Caco-2 (cell line): ENCODE measurements at regions of chr22 and their contacts with region 1.

Region 1: GRCh38 chr22:30326706-30327362 is at the start of gene TBC1D10A:
- DNase-seq: peak; percentile 96
- H3K4me3 ChIP-seq: peak within 1 kb of the TSS; percentile 87
- H3K4me3 Mint-ChIP-seq: peak within 1 kb of the TSS; percentile 79
- H3K27ac Mint-ChIP-seq: peak within 1 kb of the TSS; percentile 90
- H3K4me1 ChIP-seq: peaks cover 27% of the 10 kb centered on the region
- H3K4me1 Mint-ChIP-seq: peaks cover 30% of the 10 kb centered on the region
- H3K27me3 ChIP-seq: no peaks in the 10 kb centered on the region
- H3K27me3 Mint-ChIP-seq: no peaks in the 10 kb centered on the region
- CTCF ChIP-seq: no peak
- total RNA-seq, gene TBC1D10A: 11.1 and 12.2 TPM in 2 replicates

Region 2: DNA sequence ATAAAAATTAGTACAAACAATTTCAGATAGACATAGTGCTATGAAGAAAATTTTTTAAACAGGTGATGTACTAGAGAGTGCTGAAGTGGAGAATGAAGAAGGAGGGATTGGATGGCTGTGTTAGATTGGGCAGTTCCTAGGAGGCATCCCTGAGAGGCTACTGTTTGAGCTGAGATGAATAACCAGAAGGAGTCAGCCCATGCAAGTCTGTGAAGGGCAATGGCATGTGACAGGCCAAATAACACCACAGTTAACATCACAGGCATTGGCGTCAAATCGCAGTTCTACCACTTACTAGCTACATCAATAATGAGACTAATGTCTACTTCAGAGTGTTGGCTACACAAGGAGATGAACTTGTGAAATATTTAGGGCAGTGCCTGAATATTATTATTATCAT is 211.1 kb before region 1 on chr22:
- CTCF ChIA-PET with region 1: interaction called, 12 read pairs
- POLR2A ChIA-PET with region 1: interaction called, 3 read pairs
- intact Hi-C with region 1: no loop called
- DNase-seq: no peak
- H3K4me3 ChIP-seq: no peak overlapping the region
- H3K4me3 Mint-ChIP-seq: no peak overlapping the region
- H3K27ac Mint-ChIP-seq: no peak overlapping the region
- H3K4me1 ChIP-seq: no peaks in the 10 kb centered on the region; the same call in 1 of the 2 replicates
- H3K4me1 Mint-ChIP-seq: no peaks in the 10 kb centered on the region
- H3K27me3 ChIP-seq: no peaks in the 10 kb centered on the region
- H3K27me3 Mint-ChIP-seq: no peaks in the 10 kb centered on the region
- CTCF ChIP-seq: no peak

Region 3: GRCh38 chr22:30262917-30263741 is 63.7 kb before region 1 on chr22:
- CTCF ChIA-PET with region 1: interaction called, 8 read pairs
- POLR2A ChIA-PET with region 1: no interaction called
- intact Hi-C with region 1: loop called (anchors 2 kb)
- DNase-seq: peak; percentile 80 to 86
- H3K4me3 ChIP-seq: no peak overlapping the region
- H3K4me3 Mint-ChIP-seq: no peak overlapping the region
- H3K27ac Mint-ChIP-seq: no peak overlapping the region
- H3K4me1 ChIP-seq: peaks cover 13% of the 10 kb centered on the region
- H3K4me1 Mint-ChIP-seq: peaks cover 2% of the 10 kb centered on the region
- H3K27me3 ChIP-seq: no peaks in the 10 kb centered on the region
- H3K27me3 Mint-ChIP-seq: no peaks in the 10 kb centered on the region
- CTCF ChIP-seq: peak; percentile 95 to 98

Region 4: GRCh38 chr22:30297991-30298719 is 28.7 kb before region 1 on chr22:
- CTCF ChIA-PET with region 1: interaction called, 13 read pairs
- POLR2A ChIA-PET with region 1: interaction called, 8 read pairs
- intact Hi-C with region 1: loop called (anchors 2 kb)
- DNase-seq: peak; percentile 81 to 82
- H3K4me3 ChIP-seq: no peak overlapping the region
- H3K4me3 Mint-ChIP-seq: no peak overlapping the region
- H3K27ac Mint-ChIP-seq: peak overlapping the region; percentile 65
- H3K4me1 ChIP-seq: peaks cover 24% of the 10 kb centered on the region
- H3K4me1 Mint-ChIP-seq: peaks cover 17% of the 10 kb centered on the region
- H3K27me3 ChIP-seq: no peaks in the 10 kb centered on the region
- H3K27me3 Mint-ChIP-seq: no peaks in the 10 kb centered on the region
- CTCF ChIP-seq: peak in 1 of 2 experiments; percentile 18

Region 5: GRCh38 chr22:30356449-30357235 is 29.8 kb after region 1 on chr22 and contains the starts of genes CCDC157 and SF3A1:
- CTCF ChIA-PET with region 1: interaction called, 3 read pairs
- POLR2A ChIA-PET with region 1: interaction called, 44 read pairs
- intact Hi-C with region 1: no loop called
- DNase-seq: peak; percentile 90
- H3K4me3 ChIP-seq: peak within 1 kb of the TSS; percentile 99
- H3K4me3 Mint-ChIP-seq: peak within 1 kb of the TSS; percentile 95
- H3K27ac Mint-ChIP-seq: peak within 1 kb of the TSS; percentile 92
- H3K4me1 ChIP-seq: peaks cover 35% of the 10 kb centered on the region
- H3K4me1 Mint-ChIP-seq: peaks cover 36% of the 10 kb centered on the region
- H3K27me3 ChIP-seq: no peaks in the 10 kb centered on the region
- H3K27me3 Mint-ChIP-seq: no peaks in the 10 kb centered on the region
- CTCF ChIP-seq: no peak
- total RNA-seq, gene CCDC157: 4.8 and 4.9 TPM in 2 replicates
- total RNA-seq, gene SF3A1: 182 and 188 TPM in 2 replicates

Region 6: DNA sequence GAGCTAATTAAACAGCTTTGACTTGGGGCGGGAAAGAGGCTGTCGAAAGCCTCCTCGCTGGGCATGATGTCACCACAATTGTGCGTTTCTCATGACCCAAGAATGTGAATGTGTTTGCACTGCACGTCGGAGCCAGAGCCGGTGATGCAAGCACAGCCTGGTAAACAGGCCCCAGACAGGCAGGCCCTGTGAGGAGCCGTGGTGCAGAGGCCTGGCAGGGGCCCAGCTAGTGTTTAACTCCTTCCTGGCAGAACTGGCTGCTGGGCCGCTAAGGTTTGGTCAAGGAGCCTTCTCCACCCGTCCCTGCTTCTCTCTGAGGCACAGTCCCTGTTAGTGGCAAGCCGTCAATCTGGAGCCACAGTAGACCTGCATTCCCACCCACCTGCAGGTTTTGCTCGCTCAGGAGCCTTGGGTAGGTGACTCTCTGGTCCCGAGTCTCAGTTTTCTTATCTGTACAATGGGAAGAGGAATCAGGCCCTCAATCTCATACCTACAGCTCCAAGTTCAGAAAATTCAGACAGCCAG is 728.9 kb after region 1 on chr22:
- CTCF ChIA-PET with region 1: no interaction called
- POLR2A ChIA-PET with region 1: interaction called, 11 read pairs
- intact Hi-C with region 1: no loop called
- DNase-seq: peak; percentile 93 to 96
- H3K4me3 ChIP-seq: no peak overlapping the region
- H3K4me3 Mint-ChIP-seq: peak overlapping the region; percentile 42
- H3K27ac Mint-ChIP-seq: peak overlapping the region; percentile 91
- H3K4me1 ChIP-seq: peaks cover 26% of the 10 kb centered on the region
- H3K4me1 Mint-ChIP-seq: peaks cover 11% of the 10 kb centered on the region
- H3K27me3 ChIP-seq: no peaks in the 10 kb centered on the region
- H3K27me3 Mint-ChIP-seq: no peaks in the 10 kb centered on the region
- CTCF ChIP-seq: no peak